ENCODE measurements at regions of chr6 and their contacts with region 1.

Region 1: DNA sequence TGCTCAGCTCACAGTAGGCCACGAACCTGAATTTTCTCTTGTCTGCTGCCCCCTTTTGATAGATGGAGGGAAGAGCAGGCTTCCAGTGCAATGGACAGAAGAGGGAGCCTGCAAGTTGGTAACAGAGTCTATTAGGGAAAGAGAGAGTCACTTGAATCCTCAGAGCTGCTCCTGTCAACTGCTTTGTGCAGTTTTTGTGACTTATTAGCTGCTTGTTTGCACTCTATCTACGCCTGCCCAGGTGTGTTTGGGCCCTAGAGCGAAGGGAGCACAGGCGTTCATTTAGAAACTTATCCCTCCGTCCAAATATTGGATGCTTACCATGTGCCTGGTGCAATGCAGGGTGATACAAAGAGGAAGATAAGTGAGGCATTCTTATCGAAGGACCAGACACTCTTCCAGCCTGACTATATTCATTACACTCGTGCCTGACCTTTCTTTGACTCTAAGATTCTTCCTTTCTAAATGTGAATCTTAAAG is 11.6 kb upstream of the SLC2A12 start:
- DNase-seq: no peak

Region 2: GRCh38 chr6:133966654-133967329 is 97.2 kb before region 1 on chr6:
- intact Hi-C with region 1: loop called in 1 of 2 experiments (anchors 1 kb)
- DNase-seq: no peak

Region 3: GRCh38 chr6:133983099-133983939 is 80.7 kb before region 1 on chr6:
- intact Hi-C with region 1: loop called (anchors 5 kb)
- DNase-seq: no peak

Region 4: DNA sequence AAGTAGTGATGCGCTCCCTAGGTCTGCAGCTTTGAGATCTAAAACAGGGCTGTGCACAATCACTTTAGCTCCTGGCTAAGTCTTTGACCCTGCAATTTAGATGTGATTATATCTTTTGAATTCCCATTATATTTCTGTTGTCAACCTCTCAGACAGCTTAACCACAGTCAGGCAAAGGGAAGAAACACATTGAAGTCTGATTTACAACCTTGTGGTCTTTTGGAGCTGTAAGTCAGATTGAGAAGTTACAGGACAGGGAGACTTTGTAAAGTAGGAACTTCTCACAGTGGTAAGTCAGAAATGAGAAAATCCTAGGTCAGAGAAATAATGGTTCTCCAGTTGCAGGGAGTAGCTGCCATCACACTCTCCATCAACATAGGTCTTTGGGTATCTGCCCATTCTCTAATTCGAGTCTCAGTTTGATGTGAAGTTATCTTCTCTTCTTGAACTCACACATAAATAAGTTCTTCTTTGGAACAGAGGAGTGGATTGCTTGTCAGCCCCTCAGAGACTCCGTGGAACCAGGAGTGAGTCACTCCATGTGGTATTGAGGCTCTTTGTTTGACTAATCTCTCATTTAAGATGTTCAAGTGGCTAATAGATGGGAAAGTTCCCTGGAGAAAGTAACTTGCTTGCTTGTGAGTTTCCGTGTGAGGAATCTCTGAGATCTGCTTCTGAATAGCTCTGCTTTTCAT is 288.9 kb after region 1 on chr6:
- intact Hi-C with region 1: no loop called
- DNase-seq: no peak

Measured in posterior vena cava (tissue), 2 donors.